ENCODE measurements at regions of chr15 and their contacts with region 1.

Region 1: DNA sequence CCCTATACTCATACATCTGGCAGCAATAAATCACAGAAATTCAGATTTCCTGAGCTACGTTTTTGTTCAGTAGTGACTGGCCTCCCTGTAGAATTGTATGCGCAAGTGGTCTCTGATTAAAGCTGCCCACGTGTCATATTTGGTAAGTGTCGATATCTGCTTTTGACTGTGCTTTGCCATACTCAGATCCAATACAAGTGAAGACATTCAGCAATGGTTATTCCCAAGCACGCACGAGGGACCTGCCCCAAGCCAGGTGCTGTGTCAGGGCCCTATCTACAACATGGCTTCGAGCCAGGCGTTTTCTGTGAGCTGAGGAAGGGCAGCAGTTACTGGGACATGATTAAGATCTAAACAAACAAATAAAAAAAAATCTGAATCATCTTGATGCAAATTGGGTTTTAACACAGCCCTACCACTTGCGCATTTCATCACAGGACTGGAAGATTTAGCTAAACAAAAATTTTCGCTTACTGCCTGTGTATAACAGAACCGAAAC is 47.2 kb upstream of the ICE2 start:
- DNase-seq: no peak
- H3K4me3 ChIP-seq: no peak overlapping the region
- CTCF ChIP-seq: no peak

Region 2: DNA sequence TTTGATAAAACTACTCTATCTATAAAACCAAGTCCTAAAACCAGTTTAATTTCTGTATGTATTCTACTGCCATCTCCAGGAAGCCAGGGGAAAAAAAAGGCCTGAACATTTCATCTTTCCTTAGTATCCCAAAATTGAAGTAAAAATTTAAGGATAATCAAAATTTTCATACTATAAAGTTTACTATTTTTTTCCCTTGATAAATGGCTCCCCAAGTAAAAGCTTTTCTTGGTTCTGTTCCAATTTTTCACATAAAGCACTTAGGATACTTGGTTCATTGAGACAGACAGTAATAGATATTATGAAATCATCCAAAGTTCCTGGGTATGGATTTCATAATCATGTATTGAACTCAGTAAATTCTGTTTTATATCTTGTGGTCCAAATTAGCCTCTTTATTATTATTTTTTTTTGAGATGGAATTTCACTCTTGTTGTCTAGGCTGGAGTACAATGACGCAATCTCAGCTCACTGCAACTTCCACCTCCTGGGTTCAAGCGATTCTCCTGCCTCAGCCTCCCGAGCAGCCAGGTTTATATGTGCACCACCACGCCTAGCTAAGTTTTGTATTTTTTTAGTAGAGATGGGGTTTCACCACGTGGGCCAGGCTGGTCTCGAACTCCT is 81.8 kb before region 1 on chr15:
- in situ Hi-C with region 1: loop called (anchors 5 kb)
- DNase-seq: no peak
- H3K4me3 ChIP-seq: no peak overlapping the region
- CTCF ChIP-seq: peak; percentile 66

Region 3: DNA sequence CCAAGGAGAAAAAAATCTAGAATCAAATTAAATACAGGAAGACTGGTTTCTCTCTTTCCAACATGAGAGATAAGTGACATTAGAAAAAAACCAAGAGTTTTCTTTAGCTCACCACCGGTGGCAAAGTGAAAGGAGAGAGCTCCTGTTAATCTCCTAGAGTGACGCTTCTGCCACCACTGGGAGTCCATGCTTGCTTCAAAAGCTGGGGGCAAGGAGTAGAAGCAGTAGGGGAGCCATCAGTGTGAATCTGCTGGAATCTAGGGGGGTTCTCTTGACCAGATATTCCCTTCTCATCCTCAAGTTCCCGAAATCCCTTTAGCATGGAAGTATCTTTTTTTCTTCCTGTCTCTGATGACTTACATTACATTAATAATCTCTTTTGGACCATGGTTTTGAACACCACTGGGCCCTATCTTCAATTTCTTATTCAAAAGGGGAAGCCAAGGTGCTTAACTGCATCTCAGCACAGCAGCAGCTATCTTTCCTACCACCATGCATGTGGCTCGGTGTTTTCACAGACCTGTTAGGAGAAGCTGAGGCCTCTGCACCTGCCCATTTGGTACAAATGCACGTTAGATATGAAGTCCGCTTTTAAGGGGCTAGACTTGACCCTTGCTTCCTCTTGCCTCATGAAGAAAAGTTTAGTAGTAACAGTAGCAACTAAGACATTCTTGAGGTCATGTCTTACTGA is 40.7 kb before region 1 on chr15:
- in situ Hi-C with region 1: no loop called
- DNase-seq: no peak
- H3K4me3 ChIP-seq: no peak overlapping the region
- CTCF ChIP-seq: no peak

Region 4: DNA sequence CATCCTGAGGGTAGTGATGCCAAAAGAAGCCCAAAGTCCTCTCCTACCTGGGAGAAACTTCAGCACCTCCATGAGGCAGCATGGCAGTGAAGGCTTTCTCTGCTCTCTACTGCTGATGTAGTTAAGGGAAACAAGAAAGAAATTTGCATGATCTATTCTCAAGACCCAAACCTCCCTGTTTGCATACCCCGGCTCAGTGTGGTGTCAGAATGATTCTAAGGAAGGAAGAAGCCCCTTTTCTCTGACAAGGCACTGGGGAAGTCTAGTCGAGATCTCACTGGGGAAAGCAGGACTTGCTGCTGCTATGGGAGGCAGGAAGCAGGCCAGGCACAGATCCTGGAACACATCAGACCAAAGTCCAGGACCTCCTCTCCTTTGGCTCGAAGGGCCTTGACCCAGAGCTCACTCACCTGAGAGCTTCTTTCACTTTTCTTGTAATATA is 42.1 kb after region 1 on chr15:
- in situ Hi-C with region 1: no loop called
- DNase-seq: no peak
- H3K4me3 ChIP-seq: no peak overlapping the region
- CTCF ChIP-seq: no peak

Measured in astrocyte of the cerebellum (primary cell).